T-cell (primary cell): ENCODE measurements at regions of chr1 and their contacts with region 1.

Region 1: DNA sequence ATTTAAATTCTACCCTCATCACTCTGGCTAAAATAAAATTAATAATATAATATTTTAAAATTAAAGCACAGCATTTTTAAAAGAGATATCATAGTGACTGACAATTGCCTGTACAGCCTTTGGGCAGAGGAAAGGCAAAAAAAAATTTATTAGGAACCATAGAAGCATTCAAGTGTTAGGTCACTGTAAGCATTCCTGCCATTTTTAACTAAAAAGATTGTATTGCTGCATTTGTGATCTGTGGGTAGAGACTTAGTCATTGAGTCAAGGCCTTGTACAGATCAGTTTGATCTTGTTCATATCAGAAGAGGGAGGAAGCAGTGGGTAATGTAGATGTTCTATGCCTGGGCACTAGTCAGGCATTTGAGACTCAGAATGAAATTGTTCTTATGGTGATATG is 109.9 kb downstream of the LYPLAL1 start:
- DNase-seq: no peak
- ATAC-seq: no peak
- H3K4me3 ChIP-seq: no peak overlapping the region
- H3K4me3 Mint-ChIP-seq: no peak overlapping the region
- H3K27ac ChIP-seq: no peak overlapping the region
- H3K27ac Mint-ChIP-seq: no peak overlapping the region
- H3K4me1 ChIP-seq: no peaks in the 10 kb centered on the region
- H3K4me1 Mint-ChIP-seq: no peaks in the 10 kb centered on the region
- H3K27me3 ChIP-seq: no peaks in the 10 kb centered on the region
- H3K27me3 Mint-ChIP-seq: no peaks in the 10 kb centered on the region

Region 2: GRCh38 chr1:219174589-219175564 is 108.7 kb before region 1 on chr1:
- CTCF ChIA-PET with region 1: no interaction called
- POLR2A ChIA-PET with region 1: no interaction called
- DNase-seq: peak in 24 of 35 experiments; percentile 1 to 42 (median 9)
- ATAC-seq: peak in 3 of 4 experiments; percentile 11 to 26 (median 21)
- H3K4me3 ChIP-seq: peak overlapping the region; percentile 79 to 97
- H3K4me3 Mint-ChIP-seq: peak overlapping the region; percentile 90 to 97 (median 94)
- H3K27ac ChIP-seq: peak overlapping the region; percentile 69
- H3K27ac Mint-ChIP-seq: peak overlapping the region; percentile 92 to 94
- H3K4me1 ChIP-seq: peaks cover 9 to 19% of the 10 kb centered on the region in 2 experiments
- H3K4me1 Mint-ChIP-seq: peaks cover 44 to 56% (median 56%) of the 10 kb centered on the region in 3 donors
- H3K27me3 ChIP-seq: no peaks in the 10 kb centered on the region
- H3K27me3 Mint-ChIP-seq: no peaks in the 10 kb centered on the region

Region 3: GRCh38 chr1:219271818-219272535 is 11.6 kb before region 1 on chr1:
- CTCF ChIA-PET with region 1: no interaction called
- POLR2A ChIA-PET with region 1: interaction called in 1 of 2 experiments, 11 read pairs
- DNase-seq: no peak
- ATAC-seq: no peak
- H3K4me3 ChIP-seq: no peak overlapping the region
- H3K4me3 Mint-ChIP-seq: no peak overlapping the region
- H3K27ac ChIP-seq: no peak overlapping the region
- H3K27ac Mint-ChIP-seq: no peak overlapping the region
- H3K4me1 ChIP-seq: no peaks in the 10 kb centered on the region
- H3K4me1 Mint-ChIP-seq: no peaks in the 10 kb centered on the region
- H3K27me3 ChIP-seq: no peaks in the 10 kb centered on the region
- H3K27me3 Mint-ChIP-seq: no peaks in the 10 kb centered on the region

Region 4: DNA sequence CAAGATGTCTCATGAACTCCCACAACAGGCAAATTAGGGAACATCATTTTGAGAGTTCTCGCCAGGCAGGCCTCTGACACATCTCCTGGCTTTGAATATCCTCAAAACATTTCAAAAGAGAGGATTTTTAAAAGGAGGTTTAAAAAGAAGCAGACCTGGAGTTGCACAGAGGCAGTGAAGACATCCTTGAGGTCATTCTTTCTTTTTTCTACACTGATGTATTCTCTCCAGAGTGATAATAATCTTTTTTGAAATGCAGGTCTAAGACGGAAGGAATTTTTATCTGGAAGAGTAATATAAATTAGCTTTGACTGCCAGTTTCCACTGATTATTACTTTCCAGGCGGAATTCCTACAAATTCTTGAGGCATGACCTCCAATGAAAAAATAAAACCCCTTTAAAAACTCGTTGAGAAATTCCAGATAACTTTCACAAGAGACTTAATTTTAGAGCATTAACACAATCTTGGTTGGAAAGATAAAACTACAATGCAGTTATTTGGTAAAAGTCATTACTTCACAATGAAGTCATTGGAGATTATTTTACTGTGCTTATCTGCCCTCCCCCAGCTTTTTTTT is 15.1 kb after region 1 on chr1:
- CTCF ChIA-PET with region 1: no interaction called
- POLR2A ChIA-PET with region 1: no interaction called
- DNase-seq: no peak
- ATAC-seq: no peak
- H3K4me3 ChIP-seq: no peak overlapping the region
- H3K4me3 Mint-ChIP-seq: no peak overlapping the region
- H3K27ac ChIP-seq: no peak overlapping the region
- H3K27ac Mint-ChIP-seq: no peak overlapping the region
- H3K4me1 ChIP-seq: no peaks in the 10 kb centered on the region
- H3K4me1 Mint-ChIP-seq: no peaks in the 10 kb centered on the region
- H3K27me3 ChIP-seq: no peaks in the 10 kb centered on the region
- H3K27me3 Mint-ChIP-seq: no peaks in the 10 kb centered on the region